ENCODE measurements at regions of chr12 and their contacts with region 1.

Region 1: GRCh38 chr12:32644431-32644830 is 34.7 kb upstream of the DNM1L start:
- DNase-seq: no peak

Region 2: GRCh38 chr12:31989571-31990362 is 654.7 kb before region 1 on chr12:
- in situ Hi-C with region 1: no loop called
- DNase-seq: no peak

Region 3: GRCh38 chr12:32365473-32366064 is 278.9 kb before region 1 on chr12:
- in situ Hi-C with region 1: loop called (anchors 25 kb)
- DNase-seq: peak; percentile 81